Caco-2 (cell line): ENCODE measurements at regions of chr2 and their contacts with region 1.

Region 1: GRCh38 chr2:172465417-172466334 is 38.3 kb downstream of the ITGA6 start:
- DNase-seq: peak; percentile 79
- H3K4me3 ChIP-seq: peak overlapping the region; percentile 22
- H3K4me3 Mint-ChIP-seq: peak overlapping the region; percentile 74
- H3K27ac Mint-ChIP-seq: peak overlapping the region; percentile 65
- H3K4me1 ChIP-seq: peaks cover 10% of the 10 kb centered on the region
- H3K4me1 Mint-ChIP-seq: peaks cover 37% of the 10 kb centered on the region
- H3K27me3 ChIP-seq: no peaks in the 10 kb centered on the region
- H3K27me3 Mint-ChIP-seq: no peaks in the 10 kb centered on the region
- CTCF ChIP-seq: peak; percentile 87 to 89

Region 2: DNA sequence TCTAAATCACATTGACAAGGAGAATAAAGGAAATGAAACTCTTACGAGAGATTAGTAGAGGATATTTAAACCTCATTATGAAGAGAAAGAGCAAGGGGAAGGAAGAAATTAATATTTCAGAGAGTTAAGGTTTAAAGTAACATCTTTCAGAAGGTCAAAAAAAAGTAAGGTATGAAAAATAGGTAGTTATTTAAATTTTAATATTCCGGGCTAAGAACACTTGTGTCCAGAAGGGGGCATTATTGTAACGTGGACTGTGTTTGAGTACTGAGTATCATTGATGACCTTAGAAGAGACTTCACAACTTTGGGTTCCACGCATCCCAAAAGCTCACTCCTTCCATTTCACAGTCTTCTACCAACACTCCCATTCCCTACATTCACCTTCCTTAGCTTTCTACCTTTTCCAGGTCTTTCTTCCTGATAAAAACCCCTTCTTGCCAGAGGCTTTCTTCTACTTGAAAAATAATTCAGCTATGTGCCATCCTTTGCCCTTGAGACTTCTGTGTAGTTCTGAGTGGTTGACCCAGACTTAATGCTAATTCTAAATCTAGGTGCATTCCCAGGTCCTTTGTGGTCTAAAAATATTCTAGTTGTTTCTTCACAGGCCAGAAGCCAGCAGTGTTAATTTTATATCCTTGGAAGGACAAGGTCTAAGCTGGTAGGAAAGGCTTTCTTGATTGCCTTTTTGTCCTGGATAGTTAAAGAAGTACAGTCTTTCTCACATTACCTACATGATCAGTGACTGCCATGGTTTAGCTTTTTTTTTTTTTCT is 761.9 kb before region 1 on chr2:
- CTCF ChIA-PET with region 1: interaction called, 3 read pairs
- POLR2A ChIA-PET with region 1: no interaction called
- intact Hi-C with region 1: loop called (anchors 10 kb)
- DNase-seq: peak in 1 of 2 experiments; percentile 26
- H3K4me3 ChIP-seq: no peak overlapping the region
- H3K4me3 Mint-ChIP-seq: no peak overlapping the region
- H3K27ac Mint-ChIP-seq: no peak overlapping the region
- H3K4me1 ChIP-seq: no peaks in the 10 kb centered on the region; the same call in 1 of the 2 replicates
- H3K4me1 Mint-ChIP-seq: no peaks in the 10 kb centered on the region
- H3K27me3 ChIP-seq: no peaks in the 10 kb centered on the region
- H3K27me3 Mint-ChIP-seq: no peaks in the 10 kb centered on the region
- CTCF ChIP-seq: peak; percentile 38 to 46

Region 3: GRCh38 chr2:172172513-172173173 is 293.0 kb before region 1 on chr2:
- CTCF ChIA-PET with region 1: interaction called, 35 read pairs
- POLR2A ChIA-PET with region 1: interaction called, 3 read pairs
- intact Hi-C with region 1: loop called (anchors 1 kb)
- DNase-seq: peak; percentile 72 to 89
- H3K4me3 ChIP-seq: peak overlapping the region; percentile 50
- H3K4me3 Mint-ChIP-seq: peak overlapping the region; percentile 67
- H3K27ac Mint-ChIP-seq: no peak overlapping the region
- H3K4me1 ChIP-seq: no peaks in the 10 kb centered on the region
- H3K4me1 Mint-ChIP-seq: no peaks in the 10 kb centered on the region
- H3K27me3 ChIP-seq: peaks cover 4% of the 10 kb centered on the region; the same call in 1 of the 2 replicates
- H3K27me3 Mint-ChIP-seq: peaks cover 8% of the 10 kb centered on the region
- CTCF ChIP-seq: peak; percentile 87 to 89

Region 4: GRCh38 chr2:172339371-172340010 is 126.2 kb before region 1 on chr2:
- CTCF ChIA-PET with region 1: interaction called, 7 read pairs
- POLR2A ChIA-PET with region 1: no interaction called
- intact Hi-C with region 1: loop called (anchors 2 kb)
- DNase-seq: peak; percentile 47 to 74
- H3K4me3 ChIP-seq: no peak overlapping the region
- H3K4me3 Mint-ChIP-seq: peak overlapping the region; percentile 46
- H3K27ac Mint-ChIP-seq: peak overlapping the region; percentile 30
- H3K4me1 ChIP-seq: peaks cover 51% of the 10 kb centered on the region
- H3K4me1 Mint-ChIP-seq: peaks cover 32% of the 10 kb centered on the region
- H3K27me3 ChIP-seq: no peaks in the 10 kb centered on the region
- H3K27me3 Mint-ChIP-seq: no peaks in the 10 kb centered on the region
- CTCF ChIP-seq: no peak

Region 5: GRCh38 chr2:172442072-172442895 is 23.4 kb before region 1 on chr2:
- CTCF ChIA-PET with region 1: interaction called, 28 read pairs
- POLR2A ChIA-PET with region 1: interaction called, 3 read pairs
- intact Hi-C with region 1: no loop called
- DNase-seq: peak; percentile 76 to 89
- H3K4me3 ChIP-seq: no peak overlapping the region
- H3K4me3 Mint-ChIP-seq: peak overlapping the region; percentile 55
- H3K27ac Mint-ChIP-seq: peak overlapping the region; percentile 89
- H3K4me1 ChIP-seq: peaks cover 63% of the 10 kb centered on the region
- H3K4me1 Mint-ChIP-seq: peaks cover 37% of the 10 kb centered on the region
- H3K27me3 ChIP-seq: no peaks in the 10 kb centered on the region
- H3K27me3 Mint-ChIP-seq: no peaks in the 10 kb centered on the region
- CTCF ChIP-seq: no peak

Region 6: DNA sequence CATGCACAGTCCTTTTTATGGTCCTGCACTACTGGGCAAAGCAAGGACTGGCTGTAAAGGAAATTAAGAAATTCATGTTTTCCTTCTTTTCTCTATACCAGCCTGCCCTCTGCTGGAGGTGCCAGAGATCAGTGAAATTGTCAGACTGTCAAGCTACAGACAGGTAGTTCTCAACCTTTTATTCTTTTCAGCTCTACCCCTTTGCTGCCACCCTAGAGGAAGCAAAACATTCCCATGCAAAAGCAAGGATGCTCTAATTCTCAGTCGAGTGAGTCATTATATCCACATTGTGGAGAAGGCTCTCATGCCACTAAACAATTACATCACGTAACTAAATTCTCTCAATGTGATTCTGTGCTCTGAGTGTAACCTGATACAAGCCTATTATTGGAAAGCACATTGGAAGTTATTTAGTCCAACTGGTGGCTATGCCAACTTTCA is 244.9 kb after region 1 on chr2:
- CTCF ChIA-PET with region 1: interaction called, 3 read pairs
- POLR2A ChIA-PET with region 1: no interaction called
- intact Hi-C with region 1: loop called (anchors 5 kb)
- DNase-seq: peak in 1 of 2 experiments; percentile 59
- H3K4me3 ChIP-seq: no peak overlapping the region
- H3K4me3 Mint-ChIP-seq: no peak overlapping the region
- H3K27ac Mint-ChIP-seq: no peak overlapping the region
- H3K4me1 ChIP-seq: no peaks in the 10 kb centered on the region
- H3K4me1 Mint-ChIP-seq: no peaks in the 10 kb centered on the region
- H3K27me3 ChIP-seq: no peaks in the 10 kb centered on the region
- H3K27me3 Mint-ChIP-seq: peaks cover 18% of the 10 kb centered on the region
- CTCF ChIP-seq: peak; percentile 64 to 73